Transverse colon (tissue), 4 donors: ENCODE measurements at regions of chr10 and their contacts with region 1.

Region 1: GRCh38 chr10:112314822-112315474 is 31.7 kb downstream of the TECTB start:
- DNase-seq: peak; percentile 83
- H3K4me3 ChIP-seq: no peak overlapping the region
- H3K27ac ChIP-seq: no peak overlapping the region
- H3K4me1 ChIP-seq: no peaks in the 10 kb centered on the region
- H3K27me3 ChIP-seq: no peaks in the 10 kb centered on the region
- CTCF ChIP-seq: peak; percentile 75 to 92 (median 87)
- EP300 ChIP-seq: no peak
- POLR2A ChIP-seq: no peak

Region 2: GRCh38 chr10:112140110-112140970 is 174.6 kb before region 1 on chr10:
- in situ Hi-C with region 1: loop called in 1 of 4 experiments (anchors 25 kb)
- intact Hi-C with region 1: no loop called
- DNase-seq: peak; percentile 73
- H3K4me3 ChIP-seq: no peak overlapping the region
- H3K27ac ChIP-seq: no peak overlapping the region
- H3K4me1 ChIP-seq: no peaks in the 10 kb centered on the region
- H3K27me3 ChIP-seq: no peaks in the 10 kb centered on the region
- CTCF ChIP-seq: peak; percentile 69 to 85 (median 78)
- EP300 ChIP-seq: no peak
- POLR2A ChIP-seq: no peak

Region 3: GRCh38 chr10:112177247-112177646 is 137.7 kb before region 1 on chr10:
- in situ Hi-C with region 1: loop called in 2 of 4 experiments (anchors 10 to 25 kb)
- intact Hi-C with region 1: no loop called
- DNase-seq: no peak
- H3K4me3 ChIP-seq: no peak overlapping the region
- H3K27ac ChIP-seq: no peak overlapping the region
- H3K4me1 ChIP-seq: peaks cover 0 to 18% (median 0%) of the 10 kb centered on the region in 4 donors
- H3K27me3 ChIP-seq: no peaks in the 10 kb centered on the region
- CTCF ChIP-seq: no peak
- EP300 ChIP-seq: no peak
- POLR2A ChIP-seq: no peak

Region 4: DNA sequence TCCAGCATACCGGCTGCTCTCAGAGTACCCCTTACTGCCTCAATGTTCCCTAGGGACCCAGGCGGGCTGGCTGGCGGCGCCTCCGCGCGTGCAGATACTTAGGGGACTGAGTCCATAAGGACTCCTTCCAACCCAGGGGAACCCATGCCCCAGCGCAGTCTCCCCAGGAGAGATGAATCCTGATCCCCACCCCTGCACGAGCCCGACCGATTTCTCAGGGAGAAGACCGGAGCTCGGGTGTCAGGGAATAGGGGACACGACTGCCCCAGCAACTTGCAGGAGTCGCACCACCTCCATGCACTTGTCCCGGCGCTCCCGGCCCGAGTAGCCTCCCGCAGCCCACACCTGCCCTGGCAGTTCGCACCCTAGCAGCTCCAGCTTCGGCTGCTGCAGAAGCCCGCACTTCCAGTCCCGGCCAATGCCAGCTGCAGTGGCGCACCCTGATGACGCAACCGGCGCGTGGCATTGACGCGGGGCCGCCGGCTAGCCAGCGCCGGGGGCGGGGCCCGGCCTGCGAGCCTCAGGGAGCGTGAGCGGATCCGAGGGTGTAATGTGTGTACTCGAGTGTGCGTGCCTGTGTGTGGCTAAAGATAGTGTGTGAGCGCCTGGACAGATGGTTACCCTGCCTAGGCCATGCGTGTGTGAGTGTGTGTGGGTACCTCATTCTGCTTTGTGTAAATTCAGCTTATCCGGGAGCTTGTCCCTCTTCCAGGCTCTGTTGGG is 131.5 kb before region 1 on chr10 and contains the start of gene GPAM:
- in situ Hi-C with region 1: loop called in 2 of 4 experiments (anchors 10 to 25 kb)
- intact Hi-C with region 1: no loop called
- DNase-seq: peak; percentile 98
- H3K4me3 ChIP-seq: peak within 1 kb of the TSS; percentile 41 to 84 (median 66)
- H3K27ac ChIP-seq: peak within 1 kb of the TSS; percentile 74 to 82 (median 79)
- H3K4me1 ChIP-seq: peaks cover 10 to 13% (median 12%) of the 10 kb centered on the region in 4 donors
- H3K27me3 ChIP-seq: no peaks in the 10 kb centered on the region
- CTCF ChIP-seq: peak in 1 of 5 experiments; percentile 28
- EP300 ChIP-seq: peak; percentile 19
- POLR2A ChIP-seq: peak; percentile 80
- total RNA-seq, gene GPAM: 1.00 to 6.6 (median 5.8) TPM

Region 5: GRCh38 chr10:112191041-112191590 is 123.8 kb before region 1 on chr10:
- in situ Hi-C with region 1: loop called in 1 of 4 experiments (anchors 25 kb)
- intact Hi-C with region 1: loop called (anchors 10 kb)
- DNase-seq: no peak
- H3K4me3 ChIP-seq: no peak overlapping the region
- H3K27ac ChIP-seq: no peak overlapping the region
- H3K4me1 ChIP-seq: no peaks in the 10 kb centered on the region
- H3K27me3 ChIP-seq: no peaks in the 10 kb centered on the region
- CTCF ChIP-seq: no peak
- EP300 ChIP-seq: no peak
- POLR2A ChIP-seq: no peak